Astrocyte of the cerebellum (primary cell): ENCODE measurements at regions of chr21 and their contacts with region 1.

Region 1: DNA sequence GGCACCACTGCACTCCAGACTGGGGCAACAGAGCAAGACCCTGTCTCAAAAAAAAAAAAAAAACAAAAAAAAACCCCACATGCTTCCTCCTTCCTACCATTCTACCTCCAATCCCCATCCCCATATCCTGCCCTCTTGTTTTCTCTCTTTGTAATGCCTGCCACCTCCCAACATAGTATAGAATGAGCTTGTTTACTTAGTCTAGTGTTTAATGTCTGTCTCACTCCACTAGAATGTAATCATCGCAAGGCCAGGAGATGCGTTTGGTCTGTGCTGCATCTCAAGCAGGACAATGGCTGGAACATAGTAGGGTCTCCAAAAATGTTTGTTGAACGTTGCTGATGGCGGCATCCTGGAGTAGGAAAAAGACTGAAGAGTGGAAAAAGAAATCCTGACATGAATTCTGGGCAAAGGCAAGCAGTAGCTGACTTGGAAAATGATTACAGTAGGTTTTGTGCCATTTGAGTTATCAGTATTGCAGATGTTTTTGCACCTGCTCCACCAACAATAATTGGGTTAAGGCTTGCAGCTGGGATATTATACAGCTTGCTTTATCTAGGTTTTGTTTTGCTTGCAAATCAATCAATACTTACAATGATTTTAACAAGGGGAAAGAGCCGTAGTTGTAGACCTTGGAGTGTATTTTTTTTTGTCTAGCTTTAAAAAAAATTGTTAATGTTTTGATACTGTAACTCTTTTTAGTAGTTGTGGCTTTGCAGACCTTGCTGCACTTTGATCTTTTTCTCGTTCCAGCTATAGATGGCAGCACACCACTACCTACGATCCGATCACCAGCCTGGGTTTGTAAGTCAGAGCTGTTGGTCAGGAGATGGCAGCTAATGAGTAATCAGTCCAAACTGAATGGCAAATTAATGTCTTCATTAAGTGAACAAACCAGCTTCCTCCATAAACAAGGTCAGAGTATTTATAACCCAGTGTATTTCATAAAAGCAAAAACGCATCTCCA is 62.4 kb downstream of the BACH1 start:
- DNase-seq: no peak
- H3K4me3 ChIP-seq: no peak overlapping the region
- CTCF ChIP-seq: peak; percentile 23

Region 2: DNA sequence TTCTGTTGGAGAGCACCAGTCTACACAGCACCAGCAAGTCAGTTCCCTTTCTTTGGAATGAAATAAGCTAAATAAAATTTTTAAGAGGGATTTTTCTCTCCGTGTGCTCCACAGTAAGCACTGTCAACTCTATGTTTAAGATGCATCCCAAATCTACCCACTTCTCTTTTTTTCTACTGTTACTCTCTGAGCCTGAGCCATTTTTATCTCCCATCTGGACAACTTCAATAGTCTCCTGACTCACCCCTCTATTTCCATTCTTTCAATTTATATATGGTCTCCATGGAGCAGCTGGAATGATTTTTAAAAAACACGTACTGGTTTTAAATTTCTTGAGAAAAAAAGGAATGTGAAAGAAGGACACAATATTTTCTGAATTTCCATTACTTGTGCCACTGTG is 262.9 kb before region 1 on chr21:
- in situ Hi-C with region 1: loop called (anchors 5 kb)
- DNase-seq: no peak
- H3K4me3 ChIP-seq: no peak overlapping the region
- CTCF ChIP-seq: no peak

Region 3: GRCh38 chr21:29164325-29164942 is 196.6 kb before region 1 on chr21:
- in situ Hi-C with region 1: no loop called
- DNase-seq: peak; percentile 83
- H3K4me3 ChIP-seq: no peak overlapping the region
- CTCF ChIP-seq: peak; percentile 80

Region 4: DNA sequence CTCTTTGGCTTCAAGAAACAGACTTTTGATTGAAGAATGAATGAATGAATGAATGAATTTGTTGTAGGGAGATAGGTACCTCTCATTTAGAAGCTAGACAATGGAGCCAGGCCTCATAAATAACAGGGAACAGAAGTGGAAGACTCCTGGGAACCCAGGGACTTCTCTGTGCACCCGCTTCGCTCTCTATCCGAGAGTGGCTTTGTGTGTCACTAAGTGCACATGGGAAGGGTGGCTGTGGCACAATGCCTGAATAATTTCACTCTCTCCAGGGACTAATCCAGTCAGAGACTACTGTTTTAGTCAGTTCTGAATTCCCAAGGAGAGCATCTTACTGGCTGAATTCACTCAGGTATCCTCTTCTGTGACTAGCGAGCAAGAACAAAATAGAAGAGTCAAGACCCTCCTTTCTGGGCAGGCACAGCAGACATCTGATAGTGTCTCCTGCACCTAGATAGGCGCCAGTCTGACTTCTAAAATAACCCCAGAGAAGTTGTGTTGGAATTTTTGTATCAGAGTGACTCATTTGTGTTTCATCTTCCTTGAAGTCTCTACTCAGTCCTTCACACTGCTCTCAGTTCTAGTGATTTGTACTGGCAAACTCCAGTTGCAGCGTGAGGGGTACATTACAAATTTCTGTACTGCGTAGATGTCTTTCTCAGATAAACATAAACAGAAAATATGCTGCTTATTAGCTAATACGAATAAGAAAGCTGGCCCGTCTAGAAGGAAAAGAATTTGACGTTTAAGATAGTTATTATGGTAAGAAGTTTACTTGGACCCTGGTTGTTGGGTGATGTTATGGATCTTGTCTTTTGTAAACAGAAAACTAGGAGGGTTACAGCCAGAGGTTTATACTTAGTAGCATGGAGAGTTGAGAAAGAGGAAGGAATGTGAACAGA is 28.4 kb before region 1 on chr21:
- in situ Hi-C with region 1: no loop called
- DNase-seq: no peak
- H3K4me3 ChIP-seq: no peak overlapping the region
- CTCF ChIP-seq: no peak